ENCODE measurements at regions of chr2 and their contacts with region 1.

Region 1: DNA sequence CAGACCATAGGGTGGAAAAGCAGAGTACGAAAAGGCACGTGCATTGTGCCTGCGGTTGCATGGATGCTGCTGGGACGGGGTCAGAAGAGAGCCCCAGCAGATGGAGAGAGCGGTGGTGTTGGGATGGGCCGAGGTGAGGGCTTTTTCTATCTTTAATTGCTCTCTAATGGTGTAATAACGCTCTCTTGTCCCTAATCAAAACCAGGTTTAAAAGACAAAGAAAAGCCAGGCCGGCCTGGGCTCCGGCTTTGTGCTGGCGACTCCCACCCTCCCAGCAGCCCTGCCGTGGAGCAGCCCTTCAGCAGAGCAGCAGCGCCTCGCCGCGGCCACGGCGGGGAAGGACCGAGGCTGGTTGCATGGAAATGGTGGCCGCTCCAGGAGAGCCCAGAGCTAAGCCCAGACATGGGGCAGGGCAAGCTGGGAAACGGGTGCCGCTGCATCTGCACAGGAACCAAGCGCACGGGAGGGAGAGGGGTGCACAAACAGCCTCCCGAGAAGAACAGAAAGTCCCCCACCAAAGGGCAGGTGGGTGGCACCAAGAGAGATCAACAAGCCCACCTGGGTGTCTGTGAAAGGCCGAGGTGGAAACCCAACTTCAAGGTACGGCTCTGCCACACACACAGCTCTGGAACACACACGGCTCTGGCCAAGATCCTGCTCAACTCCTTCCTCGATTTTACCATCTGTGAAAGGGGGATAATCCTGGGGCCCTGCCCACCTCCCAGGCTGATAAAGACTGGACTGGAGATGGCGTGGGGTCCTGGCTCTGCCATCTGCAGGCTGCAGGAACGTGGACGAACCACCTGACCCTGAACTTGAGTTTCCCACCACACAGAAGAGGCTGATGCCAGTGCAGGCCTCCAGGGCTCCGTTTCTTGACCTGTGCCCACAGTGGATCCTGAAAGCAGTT is 15.0 kb downstream of the HS1BP3 start:
- DNase-seq: peak; percentile 89
- CTCF ChIP-seq: peak; percentile 99

Region 2: GRCh38 chr2:20304411-20304810 is 331.5 kb before region 1 on chr2:
- in situ Hi-C with region 1: no loop called
- DNase-seq: no peak
- CTCF ChIP-seq: no peak

Region 3: GRCh38 chr2:20539133-20539719 is 96.7 kb before region 1 on chr2:
- in situ Hi-C with region 1: loop called (anchors 10 kb)
- DNase-seq: no peak
- CTCF ChIP-seq: no peak